Ovary (tissue), 10 donors: ENCODE measurements at regions of chr7 and their contacts with region 1.

Region 1: DNA sequence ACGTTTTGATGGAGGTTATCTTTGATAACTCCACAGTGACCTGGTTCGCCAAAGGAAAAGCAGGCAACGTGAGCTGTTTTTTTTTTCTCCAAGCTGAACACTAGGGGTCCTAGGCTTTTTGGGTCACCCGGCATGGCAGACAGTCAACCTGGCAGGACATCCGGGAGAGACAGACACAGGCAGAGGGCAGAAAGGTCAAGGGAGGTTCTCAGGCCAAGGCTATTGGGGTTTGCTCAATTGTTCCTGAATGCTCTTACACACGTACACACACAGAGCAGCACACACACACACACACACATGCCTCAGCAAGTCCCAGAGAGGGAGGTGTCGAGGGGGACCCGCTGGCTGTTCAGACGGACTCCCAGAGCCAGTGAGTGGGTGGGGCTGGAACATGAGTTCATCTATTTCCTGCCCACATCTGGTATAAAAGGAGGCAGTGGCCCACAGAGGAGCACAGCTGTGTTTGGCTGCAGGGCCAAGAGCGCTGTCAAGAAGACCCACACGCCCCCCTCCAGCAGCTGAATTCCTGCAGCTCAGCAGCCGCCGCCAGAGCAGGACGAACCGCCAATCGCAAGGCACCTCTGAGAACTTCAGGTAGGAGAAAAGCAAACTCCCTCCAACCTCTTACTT is at the start of gene SERPINE1:
- DNase-seq: peak; percentile 91 to 98 (median 95)
- H3K4me3 ChIP-seq: peak within 1 kb of the TSS; percentile 22
- H3K27ac ChIP-seq: peak within 1 kb of the TSS; percentile 59 to 81
- H3K4me1 ChIP-seq: peaks cover 30% of the 10 kb centered on the region
- H3K27me3 ChIP-seq: no peaks in the 10 kb centered on the region
- CTCF ChIP-seq: peak in 2 of 3 donors; percentile 5 to 33
- EP300 ChIP-seq: peak; percentile 70
- POLR2A ChIP-seq: peak; percentile 93
- total RNA-seq, gene SERPINE1: 4.0 to 81.6 (median 20.9) TPM

Region 2: DNA sequence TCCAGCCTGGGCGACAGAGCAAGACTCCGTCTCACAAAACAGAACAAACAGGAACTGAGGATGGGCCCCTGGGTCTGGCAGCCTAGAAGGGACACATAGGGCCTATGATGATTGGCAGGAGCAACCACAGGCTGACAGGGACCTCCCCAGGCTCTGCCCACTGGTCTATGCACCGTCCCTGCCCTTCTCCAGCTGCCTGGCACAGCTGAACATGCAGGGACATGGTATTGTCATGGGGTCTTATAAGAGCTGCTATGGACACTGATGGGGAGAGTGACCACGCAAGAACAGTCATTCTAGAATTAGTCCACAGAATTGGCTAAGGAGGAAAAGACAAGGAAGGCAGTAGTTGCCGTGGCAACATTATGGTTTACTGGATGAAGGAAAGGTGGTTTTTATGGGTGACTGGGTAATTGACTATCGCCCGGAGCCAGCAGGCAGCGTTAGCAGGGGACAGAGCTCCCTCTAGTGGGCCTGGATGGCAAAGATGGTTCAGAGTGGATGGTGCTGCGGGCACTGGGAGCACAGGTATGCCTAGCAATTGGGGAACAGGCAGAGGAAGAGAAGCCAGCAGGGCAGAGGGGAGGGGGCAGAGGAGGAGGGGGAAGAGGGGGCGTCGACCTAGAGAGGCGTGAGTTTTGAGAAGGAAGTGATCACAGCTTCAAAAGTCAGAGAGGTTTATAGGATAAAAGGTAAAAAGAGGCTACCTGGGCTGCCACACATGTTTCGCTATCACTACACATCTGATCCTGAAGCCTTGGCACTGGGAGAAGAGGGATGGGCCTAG is 49.3 kb before region 1 on chr7:
- intact Hi-C with region 1: loop called in 3 of 4 experiments (anchors 2 to 10 kb)
- DNase-seq: peak; percentile 70 to 82 (median 80)
- H3K4me3 ChIP-seq: no peak overlapping the region
- H3K27ac ChIP-seq: no peak overlapping the region
- H3K4me1 ChIP-seq: no peaks in the 10 kb centered on the region
- H3K27me3 ChIP-seq: no peaks in the 10 kb centered on the region
- CTCF ChIP-seq: peak; percentile 45 to 74 (median 71)
- EP300 ChIP-seq: no peak
- POLR2A ChIP-seq: no peak

Region 3: DNA sequence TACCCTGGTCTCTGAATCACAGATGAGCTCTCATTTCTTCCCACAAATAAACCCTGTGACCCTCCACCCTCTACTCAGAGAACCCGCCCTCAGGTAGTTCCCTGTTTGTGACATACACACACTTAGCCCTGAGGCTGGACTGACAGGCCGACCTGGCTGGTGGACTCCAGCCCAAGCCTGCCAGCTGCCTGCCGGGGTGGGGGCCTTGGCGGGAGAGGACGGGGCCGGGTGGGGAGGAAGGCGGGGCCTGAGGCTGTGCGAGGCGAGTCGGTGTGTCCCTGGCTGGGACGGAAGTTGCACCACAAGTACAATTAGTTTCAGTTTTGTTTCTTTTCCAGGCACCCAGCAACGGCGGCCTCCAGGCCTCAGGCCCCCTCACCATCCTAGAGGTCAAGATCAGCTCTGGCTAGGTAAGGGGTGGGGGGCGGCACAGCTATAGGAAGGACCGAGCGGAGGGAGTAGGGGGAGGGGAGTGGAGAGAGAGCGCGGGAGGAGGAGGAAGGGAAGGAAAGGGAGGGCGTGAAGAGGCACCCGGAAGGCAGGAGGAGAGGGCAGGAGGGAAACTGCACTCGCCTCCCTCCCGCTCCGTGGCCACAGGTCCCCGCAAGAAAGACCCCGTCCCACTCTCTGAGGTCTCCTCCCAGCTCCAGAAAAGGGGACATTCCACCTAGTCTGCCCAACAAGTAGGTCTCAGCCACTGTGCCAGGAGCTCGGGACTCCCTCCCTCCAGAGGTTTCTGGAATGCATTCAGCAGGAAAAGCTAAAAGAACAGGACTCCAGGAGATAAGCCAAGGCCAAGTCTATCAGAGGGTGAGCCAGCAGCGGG is 41.4 kb before region 1 on chr7 and contains the start of gene TRIM56:
- intact Hi-C with region 1: loop called (anchors 2 to 10 kb)
- DNase-seq: peak; percentile 88 to 92 (median 90)
- H3K4me3 ChIP-seq: peak within 1 kb of the TSS; percentile 78
- H3K27ac ChIP-seq: peak within 1 kb of the TSS; percentile 64 to 91
- H3K4me1 ChIP-seq: peaks cover 7% of the 10 kb centered on the region
- H3K27me3 ChIP-seq: no peaks in the 10 kb centered on the region
- CTCF ChIP-seq: no peak
- EP300 ChIP-seq: no peak
- POLR2A ChIP-seq: peak; percentile 71
- total RNA-seq, gene TRIM56: 18.2 to 77.4 (median 48.5) TPM